WTC11 (cell line): ENCODE measurements at regions of chr11 and their contacts with region 1.

Region 1: GRCh38 chr11:3807909-3808860 is at the start of gene PGAP2:
- DNase-seq: peak; percentile 83
- ATAC-seq: peak; percentile 91
- H3K4me3 Mint-ChIP-seq: peak within 1 kb of the TSS; percentile 96
- H3K27ac Mint-ChIP-seq: peak within 1 kb of the TSS; percentile 97
- H3K4me1 Mint-ChIP-seq: peaks cover 11% of the 10 kb centered on the region
- H3K27me3 Mint-ChIP-seq: no peaks in the 10 kb centered on the region; the same call in 1 of the 2 replicates
- CTCF ChIP-seq: peak; percentile 65
- total RNA-seq, gene PGAP2: 38.2 to 43.0 TPM (median 40.7 TPM) in 3 replicates

Region 2: GRCh38 chr11:3782963-3783362 is 25.2 kb before region 1 on chr11:
- CTCF ChIA-PET with region 1: interaction called, 16 read pairs
- POLR2A ChIA-PET with region 1: no interaction called
- DNase-seq: no peak
- ATAC-seq: peak; percentile 68
- H3K4me3 Mint-ChIP-seq: no peak overlapping the region
- H3K27ac Mint-ChIP-seq: peak overlapping the region; percentile 84
- H3K4me1 Mint-ChIP-seq: peaks cover 9% of the 10 kb centered on the region
- H3K27me3 Mint-ChIP-seq: no peaks in the 10 kb centered on the region
- CTCF ChIP-seq: no peak

Region 3: GRCh38 chr11:3797329-3798095 is 10.7 kb before region 1 on chr11 and contains the start of gene NUP98:
- CTCF ChIA-PET with region 1: interaction called, 52 read pairs
- POLR2A ChIA-PET with region 1: interaction called, 3 read pairs
- DNase-seq: peak; percentile 100
- ATAC-seq: peak; percentile 95
- H3K4me3 Mint-ChIP-seq: peak within 1 kb of the TSS; percentile 83
- H3K27ac Mint-ChIP-seq: peak within 1 kb of the TSS; percentile 99
- H3K4me1 Mint-ChIP-seq: peaks cover 17% of the 10 kb centered on the region
- H3K27me3 Mint-ChIP-seq: no peaks in the 10 kb centered on the region
- CTCF ChIP-seq: no peak
- total RNA-seq, gene NUP98: 81.3 to 91.4 TPM (median 81.4 TPM) in 3 replicates

Region 4: GRCh38 chr11:3824714-3825472 is 16.7 kb after region 1 on chr11:
- CTCF ChIA-PET with region 1: interaction called, 15 read pairs
- POLR2A ChIA-PET with region 1: interaction called, 4 read pairs
- DNase-seq: peak; percentile 94
- ATAC-seq: peak; percentile 92
- H3K4me3 Mint-ChIP-seq: no peak overlapping the region
- H3K27ac Mint-ChIP-seq: peak overlapping the region; percentile 26
- H3K4me1 Mint-ChIP-seq: peaks cover 41% of the 10 kb centered on the region
- H3K27me3 Mint-ChIP-seq: no peaks in the 10 kb centered on the region
- CTCF ChIP-seq: peak; percentile 87

Region 5: GRCh38 chr11:3841426-3842350 is 33.5 kb after region 1 on chr11:
- CTCF ChIA-PET with region 1: interaction called, 40 read pairs
- POLR2A ChIA-PET with region 1: interaction called, 4 read pairs
- DNase-seq: peak; percentile 84
- ATAC-seq: peak; percentile 66
- H3K4me3 Mint-ChIP-seq: peak overlapping the region; percentile 72
- H3K27ac Mint-ChIP-seq: no peak overlapping the region
- H3K4me1 Mint-ChIP-seq: peaks cover 36% of the 10 kb centered on the region
- H3K27me3 Mint-ChIP-seq: peaks cover 9% of the 10 kb centered on the region
- CTCF ChIP-seq: peak; percentile 58

Region 6: DNA sequence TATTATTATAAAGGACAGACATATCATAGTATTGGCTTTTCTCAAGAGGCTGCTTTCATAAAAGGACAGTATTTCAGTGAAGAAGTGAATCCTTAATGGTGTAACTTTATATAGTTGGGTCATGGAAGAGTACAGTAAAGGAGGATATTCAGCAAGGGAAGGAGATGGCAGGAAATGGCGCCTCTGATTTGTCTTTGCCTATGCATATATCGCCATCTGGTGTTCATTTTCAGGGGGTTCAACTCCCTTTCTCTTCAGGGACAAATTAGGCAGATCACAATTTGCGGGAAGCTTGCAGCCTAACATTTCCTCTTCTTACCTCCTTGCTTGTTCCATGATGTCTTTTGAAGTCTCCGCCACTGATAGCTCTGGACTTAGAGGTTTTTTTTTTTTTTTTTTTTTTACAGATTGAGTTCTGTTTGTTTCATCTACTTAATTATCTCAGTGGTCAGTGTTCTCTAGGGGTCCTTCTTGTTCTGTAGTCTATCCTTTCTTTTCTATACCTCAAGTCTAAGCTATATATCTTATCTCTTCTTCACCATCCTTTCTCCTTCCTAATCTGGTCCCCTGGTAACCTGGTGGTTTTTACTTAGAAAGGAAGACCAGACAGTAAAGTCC is 264.6 kb after region 1 on chr11:
- CTCF ChIA-PET with region 1: interaction called, 31 read pairs
- POLR2A ChIA-PET with region 1: no interaction called
- DNase-seq: no peak
- ATAC-seq: peak; percentile 90
- H3K4me3 Mint-ChIP-seq: no peak overlapping the region
- H3K27ac Mint-ChIP-seq: no peak overlapping the region
- H3K4me1 Mint-ChIP-seq: no peaks in the 10 kb centered on the region
- H3K27me3 Mint-ChIP-seq: peaks cover 8% of the 10 kb centered on the region; the same call in 1 of the 2 replicates
- CTCF ChIP-seq: peak; percentile 73